ENCODE measurements at regions of chr14 and their contacts with region 1.

Region 1: DNA sequence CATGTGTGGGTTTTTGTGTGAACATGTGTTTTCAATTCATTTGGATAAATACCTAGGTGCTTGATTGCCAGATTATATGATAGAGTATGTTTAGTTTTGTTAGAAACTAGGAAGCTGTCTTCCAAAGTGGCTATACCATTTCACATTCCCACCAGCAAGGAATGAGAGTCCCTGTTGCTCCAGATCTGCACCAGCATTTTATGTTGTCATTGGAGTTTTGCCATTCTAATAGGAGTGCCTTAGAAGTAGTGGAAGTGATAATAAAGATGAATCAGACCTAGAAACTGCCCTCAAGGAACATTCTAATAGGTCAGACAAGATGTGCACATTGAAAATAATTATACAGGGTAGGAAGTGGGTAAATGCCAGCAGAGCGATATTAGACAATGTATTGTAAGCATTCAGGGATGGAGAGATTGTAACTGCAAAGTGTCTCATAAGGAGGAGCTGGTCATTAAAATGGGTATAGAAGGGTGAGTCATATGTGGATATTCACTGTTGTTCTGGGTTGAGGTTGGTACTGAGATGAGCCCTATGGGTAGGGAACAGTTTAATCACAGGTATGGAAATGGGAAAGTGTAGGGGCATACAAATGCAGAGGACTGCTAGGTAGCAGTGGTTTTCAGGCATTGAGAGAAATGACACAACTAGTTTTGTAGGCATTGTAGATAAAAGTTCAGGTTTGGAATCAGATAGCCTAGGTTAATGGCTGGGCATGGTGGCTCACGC is 71.4 kb downstream of the MNAT1 start:
- DNase-seq: no peak
- ATAC-seq: peak in 1 of 4 donors; percentile 17
- H3K4me3 ChIP-seq: no peak overlapping the region
- H3K27ac ChIP-seq: peak overlapping the region; percentile 88
- H3K4me1 ChIP-seq: peaks cover 26% of the 10 kb centered on the region
- H3K27me3 ChIP-seq: no peaks in the 10 kb centered on the region
- CTCF ChIP-seq: no peak

Region 2: GRCh38 chr14:60734465-60735242 is 71.4 kb before region 1 on chr14 and contains the start of gene MNAT1:
- intact Hi-C with region 1: loop called in 1 of 2 experiments (anchors 5 kb)
- DNase-seq: peak; percentile 76 to 87
- ATAC-seq: peak; percentile 75 to 86 (median 84)
- H3K4me3 ChIP-seq: peak within 1 kb of the TSS; percentile 93
- H3K27ac ChIP-seq: peak within 1 kb of the TSS; percentile 93
- H3K4me1 ChIP-seq: peaks cover 27% of the 10 kb centered on the region
- H3K27me3 ChIP-seq: no peaks in the 10 kb centered on the region
- CTCF ChIP-seq: no peak
- total RNA-seq, gene MNAT1: 54.5 to 74.3 (median 57.2) TPM

Region 3: DNA sequence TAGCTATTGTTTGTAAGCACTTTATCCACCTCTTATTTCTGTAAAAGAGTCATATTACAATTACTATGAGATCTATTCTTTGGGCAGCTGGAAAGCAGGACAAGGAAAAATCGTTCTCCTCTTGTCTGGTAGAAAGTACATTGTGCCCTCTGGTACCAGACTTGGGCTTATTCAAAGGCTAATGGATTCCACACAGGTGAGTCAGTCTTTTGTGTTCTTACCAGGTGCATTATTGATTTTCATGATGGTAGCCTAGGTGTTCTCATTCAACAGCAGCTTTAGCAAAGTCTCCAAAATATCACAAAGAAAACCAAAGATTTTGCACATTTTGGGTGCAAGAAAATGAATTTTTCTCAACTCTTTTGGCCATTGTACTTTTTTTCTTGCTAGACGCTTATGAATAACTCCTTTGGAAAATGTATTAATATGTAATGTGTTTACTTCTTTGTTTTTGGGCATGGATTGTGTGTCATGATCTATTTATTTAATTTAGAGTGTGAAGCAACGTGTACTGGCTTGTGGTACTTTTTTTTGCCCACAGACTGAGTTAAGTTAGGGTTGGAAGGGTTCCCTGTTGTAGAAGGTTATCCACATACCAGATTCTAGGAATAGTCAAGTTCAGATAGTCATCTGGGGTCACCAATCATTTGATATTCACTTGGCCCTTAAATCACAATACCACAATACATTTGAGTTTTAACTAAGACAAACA is 45.2 kb before region 1 on chr14:
- intact Hi-C with region 1: loop called in 1 of 2 experiments (anchors 5 kb)
- DNase-seq: no peak
- ATAC-seq: peak; percentile 59 to 82 (median 73)
- H3K4me3 ChIP-seq: no peak overlapping the region
- H3K27ac ChIP-seq: peak overlapping the region; percentile 73
- H3K4me1 ChIP-seq: peaks cover 60% of the 10 kb centered on the region
- H3K27me3 ChIP-seq: no peaks in the 10 kb centered on the region
- CTCF ChIP-seq: no peak